ENCODE measurements at regions of chr6 and their contacts with region 1.

Region 1: GRCh38 chr6:130697995-130698535 is 129.1 kb upstream of the SMLR1 start:
- DNase-seq: no peak
- H3K4me3 ChIP-seq: no peak overlapping the region
- H3K27me3 ChIP-seq: peaks cover 2% of the 10 kb centered on the region
- CTCF ChIP-seq: peak; percentile 86

Region 2: DNA sequence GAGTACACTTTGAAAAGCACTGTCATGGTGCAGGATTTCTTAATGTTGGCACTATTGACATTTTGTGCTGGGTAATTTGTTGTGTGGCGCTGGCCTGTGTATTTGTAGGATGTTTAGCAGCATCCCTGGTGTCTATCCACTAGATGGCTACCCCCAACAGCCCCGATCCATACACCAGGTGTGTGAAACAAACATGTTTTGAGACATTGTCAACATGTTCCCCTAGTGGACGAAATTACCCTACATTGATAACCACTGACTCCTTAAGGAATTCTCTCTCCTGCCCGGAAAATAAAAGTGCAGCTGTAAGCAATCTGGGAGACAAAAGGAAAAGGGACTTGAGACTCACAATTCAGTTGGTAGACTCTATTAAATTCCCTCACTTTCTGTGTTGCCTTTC is 384.9 kb before region 1 on chr6:
- CTCF ChIA-PET with region 1: interaction called, 14 read pairs
- POLR2A ChIA-PET with region 1: no interaction called
- DNase-seq: no peak
- H3K4me3 ChIP-seq: no peak overlapping the region
- H3K27me3 ChIP-seq: no peaks in the 10 kb centered on the region
- CTCF ChIP-seq: no peak

Region 3: GRCh38 chr6:130322673-130323268 is 375.3 kb before region 1 on chr6:
- CTCF ChIA-PET with region 1: interaction called, 57 read pairs
- POLR2A ChIA-PET with region 1: no interaction called
- DNase-seq: no peak
- H3K4me3 ChIP-seq: no peak overlapping the region
- H3K27me3 ChIP-seq: no peaks in the 10 kb centered on the region
- CTCF ChIP-seq: peak; percentile 91

Region 4: GRCh38 chr6:130365166-130366106 is 332.6 kb before region 1 on chr6 and contains the start of gene TMEM200A:
- CTCF ChIA-PET with region 1: interaction called, 13 read pairs
- POLR2A ChIA-PET with region 1: no interaction called
- DNase-seq: no peak
- H3K4me3 ChIP-seq: peak within 1 kb of the TSS; percentile 81
- H3K27me3 ChIP-seq: no peaks in the 10 kb centered on the region
- CTCF ChIP-seq: peak; percentile 86
- polyA plus RNA-seq, gene TMEM200A: 6.0 and 9.2 TPM in 2 replicates

Region 5: DNA sequence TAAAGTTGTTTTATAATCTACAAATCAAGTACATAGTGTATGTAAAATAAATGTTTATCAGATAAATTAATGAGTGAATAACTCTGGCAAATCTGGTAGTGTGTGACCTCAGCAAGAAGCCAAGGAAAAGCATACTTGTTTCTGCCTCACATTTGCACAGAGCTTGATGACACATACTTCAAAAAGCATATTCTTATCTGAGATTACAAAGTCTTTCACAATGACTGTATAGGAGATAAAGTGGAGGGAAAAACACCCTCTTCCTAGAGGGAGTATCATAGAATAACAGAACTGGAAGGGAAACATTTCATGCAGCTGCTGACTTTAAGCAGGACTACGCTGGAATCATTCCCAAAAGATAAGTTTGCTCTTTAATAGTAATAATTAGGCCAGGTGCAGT is 409.1 kb after region 1 on chr6:
- CTCF ChIA-PET with region 1: no interaction called
- POLR2A ChIA-PET with region 1: no interaction called
- DNase-seq: peak; percentile 17
- H3K4me3 ChIP-seq: no peak overlapping the region
- H3K27me3 ChIP-seq: no peaks in the 10 kb centered on the region
- CTCF ChIP-seq: no peak